ENCODE measurements at regions of chr2 and their contacts with region 1.

Region 1: DNA sequence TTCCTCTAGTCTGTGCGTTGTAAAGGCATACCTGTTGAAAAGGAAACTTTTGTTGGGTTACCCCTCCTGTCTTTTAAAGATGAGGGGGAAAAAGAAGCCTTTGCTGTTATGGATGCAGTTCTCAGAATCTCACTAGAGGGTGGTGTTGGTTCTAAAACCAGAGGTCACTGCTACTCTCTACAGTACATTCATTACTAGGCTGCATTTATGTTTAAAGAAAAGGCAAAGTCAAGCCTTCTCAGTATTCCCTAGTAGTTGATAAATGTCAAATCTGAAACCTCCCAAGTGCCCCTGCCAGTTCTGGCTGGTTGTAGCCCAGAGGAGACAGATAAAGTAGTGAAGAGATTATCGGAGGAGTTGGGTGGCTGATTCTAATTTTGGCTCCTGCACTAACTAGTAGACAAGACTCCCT is 1.4 kb upstream of the PLCL1 start:
- DNase-seq: peak; percentile 63
- ATAC-seq: peak; percentile 20; the same call in 1 of the 2 replicates
- H3K4me3 ChIP-seq: no peak overlapping the region
- H3K27ac ChIP-seq: no peak overlapping the region
- H3K4me1 ChIP-seq: peaks cover 9% of the 10 kb centered on the region; the same call in 1 of the 2 replicates
- H3K27me3 ChIP-seq: peaks cover 72% of the 10 kb centered on the region
- CTCF ChIP-seq: peak; percentile 85

Region 2: GRCh38 chr2:198127627-198128026 is 324.6 kb after region 1 on chr2:
- CTCF ChIA-PET with region 1: no interaction called
- POLR2A ChIA-PET with region 1: no interaction called
- intact Hi-C with region 1: loop called (anchors 1 kb)
- DNase-seq: peak; percentile 54
- ATAC-seq: 0 out of 2 replicates have a peak, but pooled peaks have one; percentile 33
- H3K4me3 ChIP-seq: no peak overlapping the region
- H3K27ac ChIP-seq: no peak overlapping the region
- H3K4me1 ChIP-seq: no peaks in the 10 kb centered on the region
- H3K27me3 ChIP-seq: no peaks in the 10 kb centered on the region
- CTCF ChIP-seq: peak; percentile 68

Region 3: GRCh38 chr2:198296665-198297308 is 493.7 kb after region 1 on chr2:
- CTCF ChIA-PET with region 1: no interaction called
- POLR2A ChIA-PET with region 1: no interaction called
- intact Hi-C with region 1: loop called (anchors 1 kb)
- DNase-seq: peak; percentile 64
- ATAC-seq: peak; percentile 82
- H3K4me3 ChIP-seq: no peak overlapping the region
- H3K27ac ChIP-seq: no peak overlapping the region
- H3K4me1 ChIP-seq: no peaks in the 10 kb centered on the region
- H3K27me3 ChIP-seq: peaks cover 21% of the 10 kb centered on the region
- CTCF ChIP-seq: peak; percentile 79

Measured in PC-3 (cell line).